Activated naive CD4-positive, alpha-beta T cell treated with anti-CD3 and anti-CD28 coated beads, Interleukin-2, amount 10 ng/mL, durations not matched to agents 7 days and 5 days (primary cell): ENCODE measurements at regions of chr9 and their contacts with region 1.

Region 1: GRCh38 chr9:120950421-120951388 is 24.1 kb upstream of the TRAF1 start:
- DNase-seq: no peak
- H3K4me3 Mint-ChIP-seq: no peak overlapping the region
- H3K27ac Mint-ChIP-seq: no peak overlapping the region
- H3K4me1 Mint-ChIP-seq: no peaks in the 10 kb centered on the region
- H3K27me3 Mint-ChIP-seq: no peaks in the 10 kb centered on the region

Region 2: GRCh38 chr9:120505186-120505585 is 445.5 kb before region 1 on chr9:
- CTCF ChIA-PET with region 1: no interaction called
- DNase-seq: no peak
- H3K4me3 Mint-ChIP-seq: no peak overlapping the region
- H3K27ac Mint-ChIP-seq: no peak overlapping the region
- H3K4me1 Mint-ChIP-seq: no peaks in the 10 kb centered on the region
- H3K27me3 Mint-ChIP-seq: no peaks in the 10 kb centered on the region

Region 3: DNA sequence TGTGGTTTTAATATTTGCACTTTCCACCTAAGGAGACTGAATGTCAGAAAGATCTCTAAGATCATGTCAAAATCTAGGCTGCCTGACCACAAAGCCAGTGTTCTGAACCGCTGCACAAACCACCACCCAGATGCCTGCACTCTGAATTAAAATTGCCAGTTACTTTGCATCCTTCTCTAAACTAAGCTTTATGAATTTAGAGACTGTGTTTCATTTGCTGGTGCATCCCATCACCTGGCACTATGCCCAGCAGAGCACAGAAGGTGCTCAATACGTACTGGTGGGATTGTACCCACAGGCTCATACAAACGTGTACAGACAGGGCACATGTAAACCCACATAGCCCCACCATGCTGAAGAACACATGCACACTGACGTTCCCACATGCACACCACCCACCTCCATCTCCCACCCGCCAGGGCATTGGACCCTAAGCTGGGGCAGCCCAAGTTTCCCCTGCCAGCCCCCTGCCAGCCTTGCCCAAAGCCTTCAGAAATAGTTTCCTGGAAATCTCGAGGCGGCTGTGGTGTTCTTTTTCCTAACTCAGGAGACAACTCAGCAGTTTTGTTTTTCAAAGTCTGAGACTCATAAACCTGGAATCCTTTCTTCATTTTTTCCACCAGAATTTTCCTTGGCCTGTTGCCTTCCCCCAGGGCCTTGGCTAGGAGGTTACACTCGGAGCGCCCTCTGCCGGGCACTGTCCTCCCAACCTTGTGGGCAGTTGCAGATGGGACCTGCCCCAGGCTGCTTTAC is 14.5 kb before region 1 on chr9:
- CTCF ChIA-PET with region 1: interaction called, 10 read pairs
- DNase-seq: peak; percentile 91
- H3K4me3 Mint-ChIP-seq: peak overlapping the region; percentile 56
- H3K27ac Mint-ChIP-seq: peak overlapping the region; percentile 92
- H3K4me1 Mint-ChIP-seq: peaks cover 64% of the 10 kb centered on the region
- H3K27me3 Mint-ChIP-seq: peaks cover 6% of the 10 kb centered on the region